ENCODE measurements at regions of chr14 and their contacts with region 1.

Region 1: GRCh38 chr14:31026395-31027118 is 378 bp upstream of the STRN3 start:
- DNase-seq: peak; percentile 85 to 95
- H3K4me3 ChIP-seq: peak overlapping the region; percentile 88
- H3K27ac ChIP-seq: peak overlapping the region; percentile 79
- H3K4me1 ChIP-seq: peaks cover 29% of the 10 kb centered on the region
- H3K27me3 ChIP-seq: no peaks in the 10 kb centered on the region
- CTCF ChIP-seq: no peak

Region 2: GRCh38 chr14:30980980-30981379 is 45.6 kb before region 1 on chr14:
- CTCF ChIA-PET with region 1: no interaction called
- POLR2A ChIA-PET with region 1: interaction called, 10 read pairs
- intact Hi-C with region 1: no loop called
- DNase-seq: no peak
- H3K4me3 ChIP-seq: no peak overlapping the region
- H3K27ac ChIP-seq: no peak overlapping the region
- H3K4me1 ChIP-seq: no peaks in the 10 kb centered on the region
- H3K27me3 ChIP-seq: no peaks in the 10 kb centered on the region
- CTCF ChIP-seq: no peak

Region 3: GRCh38 chr14:31070431-31070830 is 43.9 kb after region 1 on chr14:
- CTCF ChIA-PET with region 1: no interaction called
- POLR2A ChIA-PET with region 1: interaction called, 15 read pairs
- intact Hi-C with region 1: no loop called
- DNase-seq: peak; percentile 48 to 51
- H3K4me3 ChIP-seq: no peak overlapping the region
- H3K27ac ChIP-seq: no peak overlapping the region
- H3K4me1 ChIP-seq: no peaks in the 10 kb centered on the region
- H3K27me3 ChIP-seq: no peaks in the 10 kb centered on the region
- CTCF ChIP-seq: no peak

Region 4: GRCh38 chr14:31084385-31084784 is 57.8 kb after region 1 on chr14:
- CTCF ChIA-PET with region 1: no interaction called
- POLR2A ChIA-PET with region 1: no interaction called
- intact Hi-C with region 1: loop called (anchors 5 kb)
- DNase-seq: no peak
- H3K4me3 ChIP-seq: no peak overlapping the region
- H3K27ac ChIP-seq: no peak overlapping the region
- H3K4me1 ChIP-seq: 0 out of 2 replicates have a peak, but pooled peaks cover 7% of the 10 kb centered on the region
- H3K27me3 ChIP-seq: no peaks in the 10 kb centered on the region
- CTCF ChIP-seq: no peak

Region 5: DNA sequence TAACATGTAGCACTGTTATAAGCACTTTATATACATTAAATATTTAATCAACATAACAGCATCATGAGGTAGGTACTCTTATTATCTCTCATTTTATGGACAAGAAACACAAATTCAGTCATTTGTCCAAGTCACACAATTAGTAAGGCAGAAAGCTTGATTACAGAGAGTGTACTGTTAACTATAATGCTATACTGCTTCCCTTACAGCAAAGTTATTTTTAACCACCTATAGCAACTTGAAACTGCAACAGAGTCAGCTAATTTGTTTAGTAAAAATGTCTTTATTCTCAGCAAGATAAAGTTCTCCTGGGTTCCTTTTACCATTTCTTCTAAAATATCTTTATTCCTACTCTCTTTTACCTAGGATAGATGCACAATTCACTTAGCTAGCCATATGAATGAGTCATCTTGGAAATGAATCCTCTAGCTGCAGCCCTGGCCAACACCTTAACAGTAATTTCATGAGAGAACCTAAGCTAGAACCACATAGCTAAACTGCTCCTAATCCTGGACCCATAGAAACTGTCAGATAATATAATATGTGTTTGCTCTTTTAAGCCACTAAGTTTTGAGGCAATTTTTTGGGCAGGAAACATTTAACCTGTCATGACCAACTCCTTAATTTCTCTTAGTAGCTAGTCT is 271.3 kb after region 1 on chr14:
- CTCF ChIA-PET with region 1: no interaction called
- POLR2A ChIA-PET with region 1: interaction called, 28 read pairs
- intact Hi-C with region 1: no loop called
- DNase-seq: no peak
- H3K4me3 ChIP-seq: no peak overlapping the region
- H3K27ac ChIP-seq: no peak overlapping the region
- H3K4me1 ChIP-seq: no peaks in the 10 kb centered on the region
- H3K27me3 ChIP-seq: no peaks in the 10 kb centered on the region
- CTCF ChIP-seq: no peak